ENCODE measurements at regions of chr1 and their contacts with region 1.

Region 1: DNA sequence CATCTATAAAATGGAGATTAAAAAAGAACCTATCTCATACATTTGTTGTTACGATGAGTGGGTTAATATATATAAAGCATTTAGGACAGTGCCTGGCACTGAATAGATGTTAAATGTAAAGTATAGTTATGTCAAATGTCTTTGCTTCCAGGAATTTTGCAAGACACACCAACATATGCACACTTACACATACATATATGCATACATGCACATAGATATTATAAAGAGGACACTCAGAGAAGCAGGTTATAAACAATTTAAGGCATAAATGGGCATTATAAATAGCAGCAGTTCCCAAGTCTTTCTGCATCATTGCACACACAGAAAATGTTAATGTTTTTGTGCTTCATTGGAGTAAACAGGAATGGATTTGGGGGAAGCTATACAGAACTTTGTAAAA is 13.3 kb downstream of the CYP4X1 start:
- DNase-seq: no peak
- H3K4me3 ChIP-seq: no peak overlapping the region
- CTCF ChIP-seq: no peak

Region 2: DNA sequence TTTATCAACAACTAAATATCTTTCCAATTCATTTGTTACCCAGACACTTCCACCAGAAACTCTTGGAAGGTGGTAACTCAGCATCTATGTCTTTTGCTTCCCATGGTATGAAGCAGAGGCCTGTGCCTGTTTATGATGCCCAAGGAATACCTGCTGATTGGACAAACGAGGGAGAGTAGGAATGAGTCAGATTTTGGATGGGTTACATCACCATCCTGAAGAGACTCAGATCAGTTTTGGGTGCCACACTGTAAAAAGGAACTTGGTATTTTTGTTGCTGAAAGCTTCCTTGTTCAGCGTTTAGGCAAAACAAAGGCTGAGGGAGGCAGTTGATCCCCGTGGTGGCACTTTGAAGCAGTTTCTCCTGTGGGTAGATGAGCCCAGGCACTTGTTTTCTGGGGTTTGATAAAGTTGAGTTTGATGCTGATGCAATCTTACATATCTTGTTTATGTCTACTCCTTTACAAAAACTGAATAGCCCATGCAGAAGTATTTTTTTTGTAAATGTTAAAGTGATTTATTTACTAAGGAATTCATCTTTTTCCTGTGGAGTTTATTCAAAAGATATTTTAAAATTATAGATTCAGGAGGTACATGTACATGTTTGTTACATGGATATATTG is 40.0 kb before region 1 on chr1:
- in situ Hi-C with region 1: loop called (anchors 5 kb)
- DNase-seq: no peak
- H3K4me3 ChIP-seq: no peak overlapping the region
- CTCF ChIP-seq: no peak